AG04449 (cell line): ENCODE measurements at regions of chr6 and their contacts with region 1.

Region 1: DNA sequence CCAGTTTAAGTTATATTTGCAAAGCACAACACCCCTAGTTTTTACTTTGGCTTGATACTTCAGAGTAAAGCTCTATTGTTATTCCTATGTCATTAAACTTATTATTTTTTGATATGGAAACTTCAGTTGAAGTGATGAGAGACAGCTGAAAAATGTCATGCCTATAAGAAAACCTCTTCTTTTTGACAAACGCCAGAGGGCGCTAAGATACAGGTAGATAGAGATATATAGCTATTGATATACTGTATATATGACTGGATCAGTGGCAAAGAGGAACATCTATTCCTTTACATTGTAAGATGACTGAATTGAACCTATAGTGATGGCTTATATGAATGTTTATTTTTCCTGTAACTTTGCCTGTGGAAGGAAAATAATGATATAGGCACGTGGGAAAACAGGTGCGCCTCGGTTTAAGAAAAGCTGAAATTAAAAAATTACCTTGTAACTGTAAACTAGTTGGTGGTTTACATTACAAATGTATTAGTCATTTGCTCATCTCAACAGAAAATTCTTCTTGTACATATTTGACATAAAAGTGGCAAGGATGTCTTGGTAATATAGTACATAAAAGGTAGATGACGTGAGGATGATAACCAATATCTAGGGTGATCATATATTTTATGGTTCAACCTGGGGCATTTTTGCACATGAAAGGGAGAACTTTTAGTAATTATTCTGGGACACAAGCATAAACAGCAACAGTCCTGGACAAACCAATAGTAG is 74.1 kb downstream of the LAMA4 start:
- DNase-seq: peak; percentile 66
- H3K4me3 ChIP-seq: no peak overlapping the region
- CTCF ChIP-seq: peak; percentile 46

Region 2: GRCh38 chr6:112163295-112164257 is 16.7 kb before region 1 on chr6:
- CTCF ChIA-PET with region 1: interaction called, 84 read pairs
- POLR2A ChIA-PET with region 1: no interaction called
- DNase-seq: no peak
- H3K4me3 ChIP-seq: no peak overlapping the region
- CTCF ChIP-seq: peak; percentile 94

Region 3: GRCh38 chr6:112232845-112233256 is 52.6 kb after region 1 on chr6:
- CTCF ChIA-PET with region 1: interaction called, 13 read pairs
- POLR2A ChIA-PET with region 1: no interaction called
- DNase-seq: no peak
- H3K4me3 ChIP-seq: no peak overlapping the region
- CTCF ChIP-seq: no peak

Region 4: GRCh38 chr6:112269114-112269513 is 88.9 kb after region 1 on chr6:
- CTCF ChIA-PET with region 1: interaction called, 27 read pairs
- POLR2A ChIA-PET with region 1: no interaction called
- DNase-seq: no peak
- H3K4me3 ChIP-seq: no peak overlapping the region
- CTCF ChIP-seq: no peak

Region 5: GRCh38 chr6:112289038-112289566 is 108.8 kb after region 1 on chr6:
- CTCF ChIA-PET with region 1: interaction called, 86 read pairs
- POLR2A ChIA-PET with region 1: interaction called, 4 read pairs
- DNase-seq: peak; percentile 79
- H3K4me3 ChIP-seq: no peak overlapping the region
- CTCF ChIP-seq: no peak

Region 6: DNA sequence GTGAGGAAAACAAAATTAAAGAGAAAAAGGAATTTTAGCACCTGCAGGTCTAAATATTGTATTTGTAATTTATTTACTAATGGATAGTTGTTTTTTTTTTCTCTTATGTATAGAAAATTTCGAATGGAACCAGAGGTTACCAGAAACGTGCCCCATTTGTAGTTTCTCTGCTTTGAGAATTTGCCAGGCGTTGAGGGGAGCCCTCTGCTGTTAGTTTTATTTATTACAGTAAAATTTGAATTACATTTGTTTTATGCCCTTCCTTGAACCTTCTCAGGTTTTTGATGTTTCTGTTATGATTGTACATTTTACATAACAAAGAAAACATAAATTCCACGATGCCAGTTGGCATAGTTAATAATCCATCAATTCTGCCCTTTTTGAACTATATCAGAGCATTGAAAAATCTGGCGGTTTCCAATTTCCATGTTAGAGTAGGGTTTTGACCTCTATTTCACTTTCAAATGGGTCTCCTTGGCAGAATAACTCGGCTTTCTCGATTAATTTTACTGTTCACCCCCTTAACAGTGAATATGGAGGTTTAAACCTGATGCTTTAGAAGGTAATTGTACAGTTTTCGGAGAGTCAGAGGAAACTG is 131.8 kb after region 1 on chr6:
- CTCF ChIA-PET with region 1: interaction called, 215 read pairs
- POLR2A ChIA-PET with region 1: no interaction called
- DNase-seq: no peak
- H3K4me3 ChIP-seq: no peak overlapping the region
- CTCF ChIP-seq: peak; percentile 26

Region 7: DNA sequence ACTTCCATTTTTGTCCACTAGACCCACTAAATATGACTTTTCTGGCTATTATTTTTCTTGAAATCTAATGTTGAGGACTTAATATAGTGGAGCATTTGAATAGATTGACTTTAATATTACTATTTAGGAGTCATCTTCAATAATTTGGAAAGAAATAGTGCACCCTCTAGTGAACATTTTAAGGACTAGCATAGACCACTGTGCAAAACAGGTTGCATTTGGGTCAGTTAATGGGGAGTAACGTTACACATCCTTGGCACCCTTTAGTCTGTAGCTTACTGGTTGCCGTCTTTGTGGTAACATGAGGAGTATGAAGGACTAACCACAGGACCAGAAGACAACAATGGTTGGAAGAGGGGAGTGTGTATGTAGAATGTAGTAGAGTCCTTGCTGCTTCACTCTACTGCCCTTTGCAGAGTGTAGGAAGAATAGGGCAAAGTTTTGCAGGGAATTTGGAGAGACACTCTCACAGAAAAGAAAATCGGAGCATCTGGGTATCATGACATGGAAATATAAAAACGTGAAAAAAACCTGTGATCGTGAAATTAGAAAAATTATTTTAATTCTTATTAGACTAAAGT is 192.1 kb after region 1 on chr6:
- CTCF ChIA-PET with region 1: interaction called, 57 read pairs
- POLR2A ChIA-PET with region 1: no interaction called
- DNase-seq: no peak
- H3K4me3 ChIP-seq: no peak overlapping the region
- CTCF ChIP-seq: peak; percentile 41

Region 8: DNA sequence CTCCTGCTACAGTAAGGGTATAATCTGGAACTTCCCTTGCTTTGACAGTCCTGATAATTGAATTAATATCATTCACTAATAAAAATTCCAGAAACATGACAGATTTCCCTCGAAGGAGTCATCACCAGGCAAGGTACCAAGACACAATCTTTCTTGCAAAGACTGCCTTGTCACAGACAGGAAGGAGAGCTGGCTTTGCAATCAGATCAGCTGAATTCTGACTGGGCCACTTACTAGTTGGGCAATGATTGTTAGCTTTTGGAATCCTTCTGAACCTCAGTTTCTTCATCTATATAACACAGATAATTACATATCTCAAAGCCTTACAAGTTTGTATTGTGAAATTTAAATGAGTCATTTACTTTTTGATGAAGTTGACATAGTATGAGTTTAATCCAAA is 511.0 kb after region 1 on chr6:
- CTCF ChIA-PET with region 1: no interaction called
- POLR2A ChIA-PET with region 1: no interaction called
- DNase-seq: peak; percentile 79
- H3K4me3 ChIP-seq: no peak overlapping the region
- CTCF ChIP-seq: no peak